ENCODE measurements at regions of chr10 and their contacts with region 1.

Region 1: DNA sequence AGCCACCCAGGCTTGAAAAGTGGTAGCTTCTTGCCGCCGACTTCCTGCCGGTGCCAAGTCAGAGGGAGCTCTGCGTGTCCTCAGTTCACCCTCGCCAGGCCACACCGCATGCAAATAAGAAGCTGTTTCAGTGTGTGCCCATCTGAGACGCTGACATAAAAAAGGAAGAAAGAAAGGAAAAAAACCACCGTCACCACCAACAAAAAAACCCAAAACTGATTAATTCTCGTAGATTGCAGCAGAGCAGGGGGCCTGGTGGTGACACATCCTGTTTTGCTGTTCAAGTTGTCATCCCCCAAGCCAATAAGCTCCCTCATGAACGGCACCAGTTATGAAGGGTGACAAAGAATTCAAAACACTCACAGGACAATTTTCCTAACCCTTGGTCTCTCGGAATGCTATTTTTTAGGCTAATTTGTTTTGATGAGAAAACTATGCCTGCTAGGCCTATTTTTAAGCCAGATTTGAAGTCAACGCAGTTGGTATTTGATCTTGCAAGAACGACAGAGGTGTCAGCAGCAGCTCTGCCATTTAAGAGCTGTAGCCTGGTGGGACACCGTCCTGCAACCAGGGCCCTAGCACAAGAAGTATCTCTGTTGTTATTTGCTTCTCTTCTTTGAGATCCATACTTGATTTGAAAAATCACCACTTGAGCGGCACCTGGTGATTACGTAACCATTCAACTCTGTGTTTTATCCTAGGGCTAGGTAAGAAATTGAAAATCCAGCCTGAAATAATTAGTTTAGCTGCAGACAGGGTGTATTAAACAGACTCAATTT is 145.6 kb downstream of the PFKFB3 start:
- DNase-seq: peak; percentile 95
- ATAC-seq: peak; percentile 90
- H3K4me3 ChIP-seq: peak overlapping the region; percentile 1 to 49 (median 9)
- H3K4me3 Mint-ChIP-seq: peak overlapping the region; percentile 75
- H3K27ac ChIP-seq: peak overlapping the region; percentile 80 to 81
- H3K27ac Mint-ChIP-seq: peak overlapping the region; percentile 96
- H3K4me1 ChIP-seq: peaks cover 42 to 49% of the 10 kb centered on the region in 2 donors
- H3K4me1 Mint-ChIP-seq: peaks cover 52% of the 10 kb centered on the region
- H3K27me3 ChIP-seq: peaks cover 0 to 11% (median 0%) of the 10 kb centered on the region in 4 experiments
- H3K27me3 Mint-ChIP-seq: peaks cover 3% of the 10 kb centered on the region
- CTCF ChIP-seq: no peak

Region 2: DNA sequence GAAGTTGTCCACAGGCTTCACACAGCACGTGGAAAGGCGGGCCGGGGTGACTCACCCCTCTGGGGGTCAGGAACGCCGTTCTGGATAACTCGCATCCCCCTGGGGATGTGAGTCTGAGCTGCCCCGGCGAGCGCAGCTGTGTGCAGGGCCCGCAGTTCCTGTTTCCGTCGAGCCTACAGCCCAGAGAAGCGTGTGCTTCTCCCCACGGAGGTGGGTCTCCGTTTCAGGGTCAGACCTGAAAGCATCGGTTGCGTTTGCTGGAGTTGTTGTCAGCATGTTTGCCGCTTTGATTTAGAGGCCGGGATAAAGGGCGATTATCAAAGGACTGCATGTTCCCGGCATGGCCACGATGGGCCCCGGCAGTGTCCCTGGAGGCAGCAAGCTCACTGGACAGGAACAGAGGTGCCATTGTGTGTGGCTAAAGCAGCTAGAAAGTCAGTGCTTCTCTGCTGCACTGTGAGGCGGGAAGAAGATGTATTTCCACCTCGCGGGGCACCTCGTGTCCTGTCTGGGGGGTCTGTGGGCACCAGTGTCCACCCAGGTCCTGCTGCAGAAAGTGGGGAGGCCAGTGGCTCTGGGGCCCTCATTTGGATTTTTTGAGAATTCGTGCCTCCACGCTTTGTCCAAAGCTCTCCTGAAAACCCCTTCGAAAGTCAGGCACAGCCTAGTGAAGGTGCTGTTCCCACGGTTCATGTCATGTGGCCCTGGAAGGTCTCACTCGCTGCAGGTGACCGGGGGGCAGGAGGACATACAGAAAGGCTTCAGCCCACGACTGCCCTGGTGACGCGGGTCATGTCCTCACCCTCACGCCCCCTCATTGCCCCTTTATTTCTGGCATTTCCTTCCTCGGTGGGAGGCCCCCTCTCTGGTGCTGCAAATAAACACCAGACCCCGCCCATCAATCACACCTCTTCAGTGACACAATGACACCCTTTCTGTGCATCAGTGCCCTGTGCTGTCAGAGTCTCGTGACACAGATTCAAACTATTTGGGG is 507.7 kb before region 1 on chr10:
- CTCF ChIA-PET with region 1: no interaction called
- POLR2A ChIA-PET with region 1: no interaction called
- intact Hi-C with region 1: loop called (anchors 1 kb)
- DNase-seq: peak; percentile 92
- ATAC-seq: peak; percentile 82
- H3K4me3 ChIP-seq: peak overlapping the region in 4 of 5 experiments; percentile 55 to 63 (median 58)
- H3K4me3 Mint-ChIP-seq: peak overlapping the region; percentile 94
- H3K27ac ChIP-seq: peak overlapping the region; percentile 99 to 100
- H3K27ac Mint-ChIP-seq: peak overlapping the region; percentile 100
- H3K4me1 ChIP-seq: peaks cover 68 to 77% of the 10 kb centered on the region in 2 donors
- H3K4me1 Mint-ChIP-seq: peaks cover 70% of the 10 kb centered on the region
- H3K27me3 ChIP-seq: no peaks in the 10 kb centered on the region
- H3K27me3 Mint-ChIP-seq: no peaks in the 10 kb centered on the region
- CTCF ChIP-seq: no peak

Region 3: DNA sequence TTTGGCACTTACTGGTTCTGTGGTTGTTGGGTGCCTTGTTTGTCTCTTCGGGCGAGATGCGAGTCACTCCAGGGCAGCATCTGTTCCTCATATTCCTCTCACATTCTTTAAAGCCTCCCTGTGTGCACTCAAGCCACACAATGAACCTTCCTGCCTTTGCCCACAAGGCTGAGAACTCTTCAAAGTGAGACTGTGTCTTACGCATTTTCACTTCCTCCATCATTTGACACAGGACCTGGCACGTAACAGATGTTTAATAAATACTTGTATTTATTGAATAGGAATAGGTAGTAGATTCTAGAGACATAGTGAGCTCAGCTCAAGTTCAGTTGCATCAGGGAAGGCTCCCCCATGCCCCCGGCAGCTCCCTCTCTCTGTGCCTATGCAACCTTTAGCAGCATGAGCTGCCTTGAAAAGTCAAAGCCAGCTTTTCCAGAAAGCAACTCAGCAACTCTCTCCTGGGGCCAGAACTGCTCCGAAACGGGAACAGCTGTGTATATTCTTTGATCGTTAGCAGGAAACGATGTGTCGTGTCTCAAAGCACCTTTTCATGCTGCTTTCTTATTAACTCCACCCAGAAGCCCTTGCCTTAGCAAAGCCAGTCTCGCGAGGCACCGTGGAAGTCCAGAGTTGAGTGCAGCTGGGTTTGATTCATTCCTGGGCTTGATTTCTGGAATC is 48.0 kb before region 1 on chr10:
- CTCF ChIA-PET with region 1: interaction called, 34 read pairs
- POLR2A ChIA-PET with region 1: interaction called, 15 read pairs
- intact Hi-C with region 1: loop called (anchors 1 kb)
- DNase-seq: peak; percentile 86
- ATAC-seq: peak; percentile 85
- H3K4me3 ChIP-seq: peak overlapping the region in 4 of 5 experiments; percentile 0 to 49 (median 22)
- H3K4me3 Mint-ChIP-seq: peak overlapping the region; percentile 75
- H3K27ac ChIP-seq: peak overlapping the region; percentile 70 to 75
- H3K27ac Mint-ChIP-seq: peak overlapping the region; percentile 87
- H3K4me1 ChIP-seq: peaks cover 39 to 74% of the 10 kb centered on the region in 2 donors
- H3K4me1 Mint-ChIP-seq: peaks cover 67% of the 10 kb centered on the region
- H3K27me3 ChIP-seq: no peaks in the 10 kb centered on the region
- H3K27me3 Mint-ChIP-seq: no peaks in the 10 kb centered on the region
- CTCF ChIP-seq: no peak

Region 4: DNA sequence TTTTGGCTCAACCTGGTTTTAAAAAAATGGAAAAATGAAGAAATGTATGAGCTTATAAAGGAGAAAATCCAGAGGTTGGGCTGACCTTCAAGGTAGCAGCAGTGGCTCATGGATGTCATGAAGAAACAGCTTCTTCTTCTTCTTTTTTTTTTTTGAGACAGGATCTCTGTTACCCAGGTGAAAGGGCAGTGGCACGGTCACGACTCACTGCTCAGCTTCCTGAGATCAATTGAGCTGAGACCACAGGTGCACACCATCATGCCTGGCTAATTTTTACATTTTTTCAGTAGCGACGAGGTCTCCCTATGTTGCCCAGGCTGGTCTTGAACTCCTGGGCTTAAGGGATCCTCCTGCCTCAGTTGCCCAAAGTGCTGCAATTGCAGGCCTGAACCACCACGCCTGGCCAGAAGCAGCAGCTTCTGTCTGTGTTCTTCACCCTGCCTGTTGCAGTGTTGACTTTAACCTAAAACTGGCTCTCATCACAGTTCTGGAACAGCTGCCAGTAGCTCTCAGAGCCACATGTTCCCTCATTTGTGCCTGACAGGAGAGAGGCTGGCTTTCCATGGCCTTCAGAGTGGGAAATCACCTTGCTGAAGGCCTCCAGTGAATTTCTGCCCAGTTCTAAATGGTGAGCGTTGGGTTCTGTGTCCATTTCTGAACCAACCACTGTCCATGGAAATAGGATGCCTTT is 27.8 kb before region 1 on chr10:
- CTCF ChIA-PET with region 1: interaction called, 19 read pairs
- POLR2A ChIA-PET with region 1: interaction called, 11 read pairs
- intact Hi-C with region 1: loop called (anchors 1 kb)
- DNase-seq: peak; percentile 83
- ATAC-seq: peak; percentile 93
- H3K4me3 ChIP-seq: no peak overlapping the region
- H3K4me3 Mint-ChIP-seq: no peak overlapping the region
- H3K27ac ChIP-seq: no peak overlapping the region
- H3K27ac Mint-ChIP-seq: peak overlapping the region; percentile 84
- H3K4me1 ChIP-seq: peaks cover 38 to 51% of the 10 kb centered on the region in 2 donors
- H3K4me1 Mint-ChIP-seq: peaks cover 34% of the 10 kb centered on the region
- H3K27me3 ChIP-seq: no peaks in the 10 kb centered on the region
- H3K27me3 Mint-ChIP-seq: no peaks in the 10 kb centered on the region
- CTCF ChIP-seq: no peak

Region 5: DNA sequence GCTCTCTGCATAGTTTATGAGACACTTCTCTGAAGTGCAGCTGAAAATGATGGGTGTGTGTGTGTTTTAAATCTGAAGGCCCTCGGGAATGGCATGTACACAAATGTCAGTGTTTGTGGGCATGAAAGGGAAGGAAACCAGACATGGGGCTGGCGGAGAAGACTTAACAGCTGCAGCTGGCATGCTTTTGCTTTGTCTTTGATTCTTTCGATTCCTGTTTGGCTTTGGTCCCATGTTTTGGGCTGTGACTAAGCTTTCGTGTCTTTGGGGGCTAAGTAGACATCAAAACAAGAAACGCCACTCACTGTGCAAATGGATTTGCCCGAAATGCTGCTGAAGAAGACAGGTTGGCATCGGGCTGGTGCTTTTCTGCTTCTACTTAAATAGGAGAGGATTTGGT is 33.8 kb after region 1 on chr10:
- CTCF ChIA-PET with region 1: interaction called, 16 read pairs
- POLR2A ChIA-PET with region 1: interaction called, 33 read pairs
- intact Hi-C with region 1: loop called (anchors 1 kb)
- DNase-seq: peak; percentile 69
- ATAC-seq: peak; percentile 95
- H3K4me3 ChIP-seq: peak overlapping the region in 2 of 5 experiments; percentile 6 to 24
- H3K4me3 Mint-ChIP-seq: peak overlapping the region; percentile 86
- H3K27ac ChIP-seq: no peak overlapping the region
- H3K27ac Mint-ChIP-seq: peak overlapping the region; percentile 83
- H3K4me1 ChIP-seq: peaks cover 16 to 21% of the 10 kb centered on the region in 2 donors
- H3K4me1 Mint-ChIP-seq: peaks cover 34% of the 10 kb centered on the region
- H3K27me3 ChIP-seq: no peaks in the 10 kb centered on the region
- H3K27me3 Mint-ChIP-seq: no peaks in the 10 kb centered on the region
- CTCF ChIP-seq: no peak